Heart left ventricle (tissue), 16 donors: ENCODE measurements at regions of chr16 and their contacts with region 1.

Region 1: GRCh38 chr16:74501484-74502479 is 80.5 kb upstream of the CLEC18B start:
- DNase-seq: no peak
- ATAC-seq: peak; percentile 90 to 97 (median 94)
- H3K4me3 ChIP-seq: no peak overlapping the region
- H3K27ac ChIP-seq: peak overlapping the region; percentile 2 to 76 (median 64)
- H3K4me1 ChIP-seq: peaks cover 0 to 23% (median 6%) of the 10 kb centered on the region in 12 donors
- H3K27me3 ChIP-seq: no peaks in the 10 kb centered on the region
- CTCF ChIP-seq: no peak
- POLR2A ChIP-seq: no peak

Region 2: GRCh38 chr16:74213372-74213771 is 288.4 kb before region 1 on chr16:
- intact Hi-C with region 1: no loop called
- DNase-seq: no peak
- ATAC-seq: no peak
- H3K4me3 ChIP-seq: no peak overlapping the region
- H3K27ac ChIP-seq: no peak overlapping the region
- H3K4me1 ChIP-seq: no peaks in the 10 kb centered on the region
- H3K27me3 ChIP-seq: no peaks in the 10 kb centered on the region
- CTCF ChIP-seq: no peak
- POLR2A ChIP-seq: no peak

Region 3: GRCh38 chr16:74466872-74467271 is 34.9 kb before region 1 on chr16:
- intact Hi-C with region 1: loop called in 1 of 10 experiments (anchors 2 kb)
- DNase-seq: no peak
- ATAC-seq: no peak
- H3K4me3 ChIP-seq: no peak overlapping the region
- H3K27ac ChIP-seq: peak overlapping the region in 2 of 12 donors; percentile 1 to 22
- H3K4me1 ChIP-seq: peaks cover 0 to 13% (median 0%) of the 10 kb centered on the region in 12 donors
- H3K27me3 ChIP-seq: no peaks in the 10 kb centered on the region
- CTCF ChIP-seq: no peak
- POLR2A ChIP-seq: no peak

Region 4: GRCh38 chr16:74606521-74607310 is 104.9 kb after region 1 on chr16 and contains the start of gene GLG1:
- intact Hi-C with region 1: loop called in 4 of 10 experiments (anchors 5 to 10 kb)
- DNase-seq: peak; percentile 93 to 96 (median 94)
- ATAC-seq: peak; percentile 93 to 99 (median 98)
- H3K4me3 ChIP-seq: peak within 1 kb of the TSS; percentile 71 to 100 (median 94)
- H3K27ac ChIP-seq: peak within 1 kb of the TSS; percentile 76 to 98 (median 94)
- H3K4me1 ChIP-seq: peaks cover 0 to 46% (median 29%) of the 10 kb centered on the region in 12 donors
- H3K27me3 ChIP-seq: no peaks in the 10 kb centered on the region
- CTCF ChIP-seq: peak in 3 of 12 donors; percentile 9 to 29 (median 10)
- POLR2A ChIP-seq: peak; percentile 18 to 93
- total RNA-seq, gene GLG1: 86.7 to 138 (median 115) TPM